Endothelial cell of umbilical vein (primary cell): ENCODE measurements at regions of chr9 and their contacts with region 1.

Region 1: GRCh38 chr9:34376596-34377403 is at the start of gene MYORG:
- DNase-seq: peak; percentile 84
- H3K4me3 ChIP-seq: peak within 1 kb of the TSS; percentile 44 to 79 (median 65)
- H3K27ac ChIP-seq: no peak within 1 kb of the TSS
- H3K4me1 ChIP-seq: peaks cover 11% of the 10 kb centered on the region
- H3K27me3 ChIP-seq: no peaks in the 10 kb centered on the region
- CTCF ChIP-seq: no peak
- POLR2A ChIP-seq: no peak
- total RNA-seq, gene MYORG: 6.3 and 7.0 TPM in 2 replicates

Region 2: GRCh38 chr9:34126207-34127034 is 250.4 kb before region 1 on chr9 and contains the start of gene DCAF12:
- CTCF ChIA-PET with region 1: no interaction called
- POLR2A ChIA-PET with region 1: no interaction called
- dilution Hi-C with region 1: no loop called
- intact Hi-C with region 1: loop called (anchors 5 kb)
- DNase-seq: peak; percentile 95
- H3K4me3 ChIP-seq: peak within 1 kb of the TSS; percentile 64 to 82 (median 75)
- H3K27ac ChIP-seq: peak within 1 kb of the TSS; percentile 49
- H3K4me1 ChIP-seq: peaks cover 15% of the 10 kb centered on the region
- H3K27me3 ChIP-seq: no peaks in the 10 kb centered on the region
- CTCF ChIP-seq: no peak
- POLR2A ChIP-seq: peak; percentile 89
- total RNA-seq, gene DCAF12: 28.2 and 28.4 TPM in 2 replicates

Region 3: GRCh38 chr9:34178520-34179212 is 198.1 kb before region 1 on chr9 and contains the start of gene UBAP1:
- CTCF ChIA-PET with region 1: interaction called, 3 read pairs
- POLR2A ChIA-PET with region 1: no interaction called
- dilution Hi-C with region 1: no loop called
- intact Hi-C with region 1: loop called (anchors 5 kb)
- DNase-seq: peak; percentile 99
- H3K4me3 ChIP-seq: peak within 1 kb of the TSS; percentile 51 to 87 (median 79)
- H3K27ac ChIP-seq: peak within 1 kb of the TSS; percentile 58
- H3K4me1 ChIP-seq: no peaks in the 10 kb centered on the region
- H3K27me3 ChIP-seq: no peaks in the 10 kb centered on the region
- CTCF ChIP-seq: no peak
- POLR2A ChIP-seq: peak; percentile 64
- total RNA-seq, gene UBAP1: 38.0 and 38.8 TPM in 2 replicates

Region 4: DNA sequence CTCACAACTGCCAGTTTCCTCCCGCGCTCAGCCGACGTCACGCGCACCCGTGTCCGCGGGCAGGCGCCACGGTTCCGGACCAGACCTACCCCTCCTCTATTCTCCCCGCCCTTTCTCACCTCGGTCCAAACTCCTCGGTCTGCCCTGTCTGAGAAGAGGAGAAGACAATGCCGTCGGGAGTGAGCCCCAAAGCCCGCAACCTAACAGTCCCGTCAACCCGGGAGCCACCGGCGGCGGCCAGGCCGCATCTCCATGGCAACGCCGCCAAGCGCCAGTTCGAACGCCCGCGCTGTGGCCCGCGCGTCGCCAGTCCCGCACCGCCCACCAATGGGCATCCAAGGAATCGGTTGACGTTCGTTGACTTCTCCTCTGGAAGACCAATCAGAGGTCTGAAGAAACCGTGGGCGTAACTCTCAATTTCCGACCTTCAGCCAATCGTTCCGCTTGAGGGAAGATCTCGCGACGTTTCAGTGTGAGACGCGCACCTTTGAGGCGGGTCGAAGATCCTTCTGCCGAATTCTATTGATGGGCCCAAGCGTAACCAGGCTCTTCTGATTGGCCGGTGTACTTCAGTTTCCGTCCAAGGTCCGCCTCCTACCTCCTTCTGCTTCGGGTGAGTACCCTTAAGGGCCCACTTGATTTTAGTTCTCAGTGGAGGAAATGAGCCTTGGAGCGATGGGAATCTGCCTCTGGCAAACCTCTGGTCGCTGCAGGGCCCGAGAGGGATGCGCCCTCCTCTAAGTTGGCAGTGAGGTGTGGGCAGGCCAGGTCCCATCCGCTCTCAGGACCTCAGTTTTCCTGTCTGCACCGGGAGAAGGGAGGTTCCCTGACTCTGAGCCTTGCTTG is 47.6 kb before region 1 on chr9 and contains the starts of genes KIF24 and NUDT2:
- CTCF ChIA-PET with region 1: interaction called, 152 read pairs
- POLR2A ChIA-PET with region 1: no interaction called
- dilution Hi-C with region 1: no loop called
- intact Hi-C with region 1: loop called (anchors 1 kb)
- DNase-seq: peak; percentile 100
- H3K4me3 ChIP-seq: peak within 1 kb of the TSS; percentile 75 to 89 (median 87)
- H3K27ac ChIP-seq: peak within 1 kb of the TSS; percentile 89
- H3K4me1 ChIP-seq: peaks cover 8% of the 10 kb centered on the region
- H3K27me3 ChIP-seq: no peaks in the 10 kb centered on the region
- CTCF ChIP-seq: no peak
- POLR2A ChIP-seq: peak; percentile 91
- total RNA-seq, gene KIF24: 4.5 and 4.8 TPM in 2 replicates
- total RNA-seq, gene NUDT2: 25.1 and 25.2 TPM in 2 replicates

Region 5: DNA sequence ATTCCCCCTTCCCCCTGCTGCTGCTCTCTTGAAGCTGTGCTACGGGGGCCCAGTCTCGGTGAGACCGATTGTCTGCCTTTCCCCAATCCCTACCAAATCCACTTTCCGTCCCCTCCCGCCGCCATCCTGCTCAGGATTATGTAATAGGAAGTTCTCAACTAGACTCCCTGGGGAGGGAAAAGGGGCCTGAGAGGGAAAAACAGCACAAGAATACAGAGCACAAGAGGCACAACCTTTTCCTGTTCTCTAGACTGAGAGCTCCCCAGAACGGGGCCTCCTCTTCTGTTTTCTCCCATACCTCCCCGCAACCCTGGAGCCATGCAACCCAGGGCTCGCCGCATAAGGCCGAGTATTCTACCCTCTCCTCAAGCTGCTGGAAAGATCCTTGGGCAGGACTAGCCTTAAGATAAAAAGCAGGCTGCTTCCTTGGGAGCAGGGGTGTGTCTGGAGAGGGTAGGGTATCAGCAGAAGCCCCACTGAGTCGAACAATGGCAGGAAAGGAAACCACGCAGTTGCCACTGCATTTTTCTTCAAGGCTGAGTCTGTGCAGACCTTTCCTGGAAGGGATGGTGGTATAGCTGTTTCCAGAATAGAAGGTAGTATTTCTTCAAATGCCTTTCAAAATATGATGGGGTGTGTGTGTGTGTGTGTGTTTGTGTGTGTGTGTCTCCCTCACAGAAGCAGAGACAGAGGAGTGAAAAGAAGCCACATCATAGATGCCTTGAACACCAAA is 13.0 kb before region 1 on chr9:
- CTCF ChIA-PET with region 1: interaction called, 10 read pairs
- POLR2A ChIA-PET with region 1: interaction called, 4 read pairs
- dilution Hi-C with region 1: no loop called
- intact Hi-C with region 1: loop called (anchors 1 kb)
- DNase-seq: peak; percentile 73
- H3K4me3 ChIP-seq: no peak overlapping the region
- H3K27ac ChIP-seq: no peak overlapping the region
- H3K4me1 ChIP-seq: peaks cover 13% of the 10 kb centered on the region
- H3K27me3 ChIP-seq: no peaks in the 10 kb centered on the region
- CTCF ChIP-seq: no peak
- POLR2A ChIP-seq: no peak